Calu3 (cell line): ENCODE measurements at regions of chr3 and their contacts with region 1.

Region 1: DNA sequence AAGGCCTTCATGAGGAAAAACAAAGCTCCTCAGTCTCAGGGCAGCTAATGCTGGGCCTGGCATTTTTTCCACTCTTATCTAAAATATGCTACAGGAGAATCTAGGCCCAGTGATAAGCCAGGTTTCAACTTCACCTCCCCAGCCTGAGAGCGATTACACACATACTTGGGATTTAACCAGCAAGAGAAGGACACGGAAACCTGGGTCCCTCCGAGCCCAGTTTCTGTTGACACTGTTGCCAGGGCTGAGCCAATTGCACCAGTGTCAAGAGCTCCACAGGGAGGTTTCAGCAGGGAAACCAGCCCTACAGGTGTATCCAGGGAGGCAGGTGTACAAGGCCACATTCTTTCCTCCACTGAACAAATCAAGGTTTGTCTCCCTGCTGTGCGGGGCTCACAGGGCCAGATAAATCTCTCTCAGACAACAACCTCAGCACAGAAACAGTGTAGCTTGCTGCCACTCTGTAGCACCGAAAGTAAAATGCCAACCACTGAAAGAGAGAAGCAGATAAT is 85.4 kb downstream of the MAGI1 start:
- DNase-seq: peak; percentile 92
- H3K4me3 Mint-ChIP-seq: peak overlapping the region; percentile 62
- H3K27ac Mint-ChIP-seq: peak overlapping the region; percentile 99
- H3K4me1 Mint-ChIP-seq: peaks cover 78% of the 10 kb centered on the region
- H3K27me3 Mint-ChIP-seq: no peaks in the 10 kb centered on the region
- CTCF ChIP-seq: no peak

Region 2: DNA sequence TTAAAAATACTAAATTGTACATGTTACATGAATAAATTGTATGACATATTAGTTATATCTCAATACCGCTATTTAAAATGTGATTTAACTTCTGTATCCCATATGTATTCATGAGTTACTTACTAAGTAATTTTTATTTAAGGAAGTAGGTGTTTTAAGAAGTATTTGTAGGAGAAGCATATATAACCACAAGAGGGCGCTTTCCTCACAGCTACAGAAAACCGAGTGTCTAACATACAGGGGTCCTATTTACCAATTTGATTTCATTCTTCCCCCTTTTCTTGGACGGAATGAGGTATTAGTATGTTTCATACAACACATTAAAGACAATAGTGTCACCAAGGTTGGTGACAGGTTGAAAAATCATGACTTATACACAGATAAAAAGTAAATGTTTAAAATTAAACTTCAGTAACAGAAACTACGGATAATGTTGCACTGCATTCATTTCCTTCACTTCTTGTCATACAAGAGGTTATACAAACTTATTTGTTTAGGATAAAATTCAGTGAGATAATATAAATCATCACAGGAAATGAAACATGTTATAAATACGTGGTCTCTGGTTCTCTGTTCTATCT is 168.2 kb before region 1 on chr3:
- CTCF ChIA-PET with region 1: interaction called, 4 read pairs
- intact Hi-C with region 1: loop called (anchors 5 kb)
- DNase-seq: peak; percentile 17
- H3K4me3 Mint-ChIP-seq: no peak overlapping the region
- H3K27ac Mint-ChIP-seq: no peak overlapping the region
- H3K4me1 Mint-ChIP-seq: peaks cover 24% of the 10 kb centered on the region
- H3K27me3 Mint-ChIP-seq: no peaks in the 10 kb centered on the region
- CTCF ChIP-seq: peak; percentile 43

Region 3: DNA sequence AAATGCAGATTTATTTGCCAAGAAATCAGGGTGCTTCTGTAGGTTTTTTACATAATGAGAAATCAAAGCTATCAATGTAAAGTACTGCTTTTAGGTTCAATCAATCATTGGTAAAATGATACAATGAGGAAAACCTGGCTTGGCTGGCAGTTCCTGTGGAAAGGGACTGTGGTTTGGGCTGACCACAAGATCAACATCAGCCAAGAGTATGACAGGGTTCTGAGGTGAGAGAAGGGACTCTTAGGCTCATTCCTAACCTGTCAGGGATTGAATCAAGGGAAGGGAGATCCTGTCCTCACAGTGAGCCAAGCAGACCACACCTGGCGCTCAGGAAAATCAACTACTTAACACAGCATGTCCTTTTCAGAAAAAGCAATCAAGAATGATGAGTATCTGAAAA is 25.8 kb before region 1 on chr3:
- CTCF ChIA-PET with region 1: interaction called, 10 read pairs
- intact Hi-C with region 1: loop called (anchors 1 kb)
- DNase-seq: peak; percentile 69
- H3K4me3 Mint-ChIP-seq: peak overlapping the region; percentile 65
- H3K27ac Mint-ChIP-seq: peak overlapping the region; percentile 93
- H3K4me1 Mint-ChIP-seq: peaks cover 61% of the 10 kb centered on the region
- H3K27me3 Mint-ChIP-seq: no peaks in the 10 kb centered on the region
- CTCF ChIP-seq: no peak

Region 4: GRCh38 chr3:65996589-65996988 is 43.2 kb after region 1 on chr3:
- CTCF ChIA-PET with region 1: no interaction called
- intact Hi-C with region 1: loop called (anchors 5 kb)
- DNase-seq: peak; percentile 68
- H3K4me3 Mint-ChIP-seq: peak overlapping the region; percentile 65
- H3K27ac Mint-ChIP-seq: peak overlapping the region; percentile 92
- H3K4me1 Mint-ChIP-seq: peaks cover 69% of the 10 kb centered on the region
- H3K27me3 Mint-ChIP-seq: no peaks in the 10 kb centered on the region
- CTCF ChIP-seq: no peak

Region 5: GRCh38 chr3:66138336-66139313 is 185.3 kb after region 1 on chr3:
- CTCF ChIA-PET with region 1: interaction called, 7 read pairs
- intact Hi-C with region 1: loop called (anchors 2 kb)
- DNase-seq: peak; percentile 64
- H3K4me3 Mint-ChIP-seq: no peak overlapping the region
- H3K27ac Mint-ChIP-seq: no peak overlapping the region
- H3K4me1 Mint-ChIP-seq: peaks cover 40% of the 10 kb centered on the region
- H3K27me3 Mint-ChIP-seq: no peaks in the 10 kb centered on the region
- CTCF ChIP-seq: peak; percentile 54